Right cardiac atrium (tissue), 5 donors: ENCODE measurements at regions of chr12 and their contacts with region 1.

Region 1: GRCh38 chr12:4037747-4038312 is 164.6 kb upstream of the PARP11 start:
- DNase-seq: peak in 1 of 3 donors; percentile 52
- ATAC-seq: peak in 1 of 2 donors; percentile 33
- H3K4me3 ChIP-seq: no peak overlapping the region
- H3K27ac ChIP-seq: no peak overlapping the region
- H3K4me1 ChIP-seq: no peaks in the 10 kb centered on the region
- H3K27me3 ChIP-seq: no peaks in the 10 kb centered on the region

Region 2: DNA sequence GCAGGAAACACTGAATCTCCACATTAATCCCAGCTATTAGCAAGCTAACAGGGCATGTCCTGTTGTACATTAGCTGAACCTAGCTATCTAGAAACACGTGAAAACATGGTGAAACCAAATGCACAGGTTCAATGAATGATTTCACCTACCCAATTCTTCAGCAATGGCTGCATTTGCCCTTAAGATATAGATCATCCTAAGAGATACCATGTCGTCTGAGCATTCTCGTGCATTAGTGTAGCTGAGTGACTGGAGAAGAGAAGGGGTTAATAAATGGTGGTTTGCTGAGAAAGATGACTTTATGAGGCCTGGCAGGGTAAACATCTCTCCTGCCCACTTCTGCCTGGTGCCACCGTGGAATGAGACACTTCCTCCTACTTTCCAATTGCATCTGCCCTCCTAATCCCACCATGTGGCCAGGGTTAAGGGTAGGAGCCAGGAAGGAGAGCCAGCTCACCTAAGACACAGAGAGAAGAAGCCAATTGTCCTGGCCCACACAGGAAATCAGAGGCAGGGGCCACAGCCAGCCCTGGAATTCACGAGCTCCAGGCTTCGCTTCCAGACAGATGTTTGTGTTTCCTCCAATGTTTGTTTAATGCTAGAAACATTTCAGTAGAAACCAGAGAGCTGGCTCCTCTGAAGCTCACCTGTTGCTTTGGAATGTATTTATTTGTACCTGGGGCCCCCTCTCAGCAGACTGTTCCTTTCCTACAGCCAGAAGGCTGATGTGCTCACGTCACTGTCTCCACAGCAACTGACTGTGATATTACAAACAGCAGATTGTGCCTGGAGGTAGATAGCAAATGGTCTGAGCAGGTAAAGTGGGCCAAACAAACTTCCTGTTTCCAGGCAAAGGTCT is 38.6 kb before region 1 on chr12:
- intact Hi-C with region 1: loop called in 2 of 4 experiments (anchors 5 kb)
- DNase-seq: no peak
- ATAC-seq: no peak
- H3K4me3 ChIP-seq: no peak overlapping the region
- H3K27ac ChIP-seq: no peak overlapping the region
- H3K4me1 ChIP-seq: no peaks in the 10 kb centered on the region
- H3K27me3 ChIP-seq: no peaks in the 10 kb centered on the region

Region 3: GRCh38 chr12:4084573-4084972 is 46.7 kb after region 1 on chr12:
- intact Hi-C with region 1: no loop called
- DNase-seq: peak; percentile 44 to 69 (median 47)
- ATAC-seq: peak; percentile 47 to 65
- H3K4me3 ChIP-seq: no peak overlapping the region
- H3K27ac ChIP-seq: no peak overlapping the region
- H3K4me1 ChIP-seq: no peaks in the 10 kb centered on the region
- H3K27me3 ChIP-seq: no peaks in the 10 kb centered on the region